ENCODE measurements at regions of chr14 and their contacts with region 1.

Region 1: GRCh38 chr14:20855652-20856291 is 35.4 kb upstream of the RNASE3 start:
- DNase-seq: peak; percentile 66
- H3K4me3 ChIP-seq: no peak overlapping the region
- H3K27ac ChIP-seq: no peak overlapping the region
- H3K4me1 ChIP-seq: no peaks in the 10 kb centered on the region
- H3K27me3 ChIP-seq: no peaks in the 10 kb centered on the region
- CTCF ChIP-seq: peak; percentile 69

Region 2: GRCh38 chr14:20697273-20698017 is 158.3 kb before region 1 on chr14:
- intact Hi-C with region 1: loop called (anchors 5 kb)
- DNase-seq: peak; percentile 80
- H3K4me3 ChIP-seq: no peak overlapping the region
- H3K27ac ChIP-seq: no peak overlapping the region
- H3K4me1 ChIP-seq: no peaks in the 10 kb centered on the region
- H3K27me3 ChIP-seq: no peaks in the 10 kb centered on the region
- CTCF ChIP-seq: peak; percentile 62

Region 3: GRCh38 chr14:20757965-20758364 is 97.8 kb before region 1 on chr14:
- intact Hi-C with region 1: loop called (anchors 5 kb)
- DNase-seq: peak; percentile 65
- H3K4me3 ChIP-seq: no peak overlapping the region
- H3K27ac ChIP-seq: no peak overlapping the region
- H3K4me1 ChIP-seq: no peaks in the 10 kb centered on the region
- H3K27me3 ChIP-seq: no peaks in the 10 kb centered on the region
- CTCF ChIP-seq: peak; percentile 29

Region 4: GRCh38 chr14:20970983-20971704 is 115.4 kb after region 1 on chr14:
- intact Hi-C with region 1: loop called (anchors 2 kb)
- DNase-seq: peak; percentile 82
- H3K4me3 ChIP-seq: peak overlapping the region; percentile 50
- H3K27ac ChIP-seq: peak overlapping the region; percentile 34
- H3K4me1 ChIP-seq: peaks cover 3% of the 10 kb centered on the region
- H3K27me3 ChIP-seq: no peaks in the 10 kb centered on the region
- CTCF ChIP-seq: peak; percentile 74

Region 5: DNA sequence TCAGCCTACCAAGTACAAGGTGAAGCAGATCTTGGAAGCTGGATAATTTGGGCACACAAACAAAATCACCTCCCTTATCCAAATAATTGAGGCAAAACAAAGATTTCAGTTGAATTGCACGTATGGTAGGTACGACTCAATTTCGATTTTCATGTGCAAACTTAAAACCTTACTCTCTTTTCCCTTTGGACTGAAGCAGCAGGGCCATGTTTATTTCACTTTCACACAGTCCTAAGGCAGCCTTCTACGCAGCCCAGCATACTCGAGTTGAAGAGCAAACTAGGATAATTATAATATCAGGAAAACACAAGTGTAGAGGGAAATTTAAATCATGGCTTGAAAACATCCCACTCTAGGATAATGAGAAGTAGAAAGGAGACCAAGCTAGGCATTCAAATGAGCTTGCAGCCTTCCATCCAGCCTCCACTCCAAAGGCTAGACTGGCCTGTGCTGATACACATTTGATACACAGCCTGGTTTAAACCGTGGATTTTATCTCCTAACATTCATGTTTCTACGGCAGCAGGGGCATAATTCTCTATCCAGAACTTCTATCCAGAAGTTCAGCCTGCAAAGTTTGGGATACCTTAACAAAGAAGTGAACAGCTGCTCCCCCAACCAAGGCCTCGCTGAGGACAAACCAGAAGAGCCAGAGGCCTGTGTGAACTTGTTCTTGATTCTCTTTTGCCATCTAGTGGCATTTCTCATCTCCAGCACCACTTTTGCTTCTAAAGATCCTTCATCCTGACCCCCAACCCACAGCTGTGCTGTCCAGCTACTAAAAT is 184.0 kb after region 1 on chr14:
- intact Hi-C with region 1: loop called (anchors 10 kb)
- DNase-seq: peak; percentile 62
- H3K4me3 ChIP-seq: no peak overlapping the region
- H3K27ac ChIP-seq: peak overlapping the region; percentile 69
- H3K4me1 ChIP-seq: peaks cover 6% of the 10 kb centered on the region
- H3K27me3 ChIP-seq: no peaks in the 10 kb centered on the region
- CTCF ChIP-seq: peak; percentile 59